ENCODE measurements at regions of chr12 and their contacts with region 1.

Region 1: DNA sequence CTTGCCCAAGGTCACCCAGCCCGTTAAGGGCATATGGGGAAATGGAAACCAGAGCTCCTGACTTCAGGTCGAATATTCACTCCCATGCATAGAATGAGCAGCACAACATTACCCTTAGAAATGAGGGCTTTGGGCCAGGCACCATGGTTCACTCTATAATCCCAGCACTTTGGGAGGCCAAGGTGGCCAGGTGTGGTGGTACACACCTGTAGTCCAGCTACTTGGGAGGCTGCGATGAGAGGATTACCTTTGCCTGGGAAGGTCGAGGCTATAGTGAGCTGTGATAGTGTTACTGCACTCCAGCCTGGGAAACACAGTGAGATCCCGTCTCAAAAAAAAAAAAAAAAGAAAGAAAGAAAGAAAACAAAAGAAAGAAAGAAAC is 341.0 kb upstream of the TMPO start:
- DNase-seq: no peak
- ATAC-seq: no peak
- H3K4me3 ChIP-seq: no peak overlapping the region
- H3K27ac ChIP-seq: no peak overlapping the region
- H3K4me1 ChIP-seq: no peaks in the 10 kb centered on the region
- H3K27me3 ChIP-seq: no peaks in the 10 kb centered on the region; a peak in 1 of 4 replicates
- CTCF ChIP-seq: no peak
- EP300 ChIP-seq: no peak
- POLR2A ChIP-seq: no peak
- RAD21 ChIP-seq: no peak

Region 2: GRCh38 chr12:98154850-98155249 is 19.6 kb before region 1 on chr12:
- CTCF ChIA-PET with region 1: interaction called, 4 read pairs
- POLR2A ChIA-PET with region 1: interaction called, 3 read pairs
- RAD21 ChIA-PET with region 1: interaction called, 3 read pairs
- SMC1A ChIA-PET with region 1: interaction called, 16 read pairs
- in situ Hi-C with region 1: no loop called
- intact Hi-C with region 1: no loop called
- DNase-seq: no peak
- ATAC-seq: peak; percentile 90
- H3K4me3 ChIP-seq: no peak overlapping the region
- H3K27ac ChIP-seq: no peak overlapping the region
- H3K4me1 ChIP-seq: no peaks in the 10 kb centered on the region
- H3K27me3 ChIP-seq: peaks cover 0 to 3% of the 10 kb centered on the region in 2 experiments; a peak in 1 of 4 replicates
- CTCF ChIP-seq: peak in 2 of 3 experiments; percentile 37 to 49; a peak in 2 of 6 replicates
- EP300 ChIP-seq: no peak
- POLR2A ChIP-seq: no peak
- RAD21 ChIP-seq: no peak

Region 3: DNA sequence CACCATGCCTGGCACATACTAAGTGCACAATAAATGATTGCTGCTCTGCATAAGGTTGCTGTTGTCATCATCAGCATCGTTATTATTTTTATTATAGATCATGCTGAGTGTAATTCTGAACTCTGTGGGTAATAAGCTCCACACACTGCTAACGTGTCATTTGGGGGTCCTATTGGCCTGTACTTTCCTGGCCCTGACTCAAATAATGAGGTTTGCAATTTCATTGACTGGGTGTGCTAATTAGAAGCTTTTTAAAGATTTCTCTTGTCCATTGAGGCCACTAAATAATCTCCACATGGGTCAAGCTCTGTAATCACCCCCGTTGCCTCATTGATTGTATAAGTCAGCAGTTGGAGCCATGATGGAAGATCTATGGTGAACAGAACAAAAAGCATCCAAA is 20.2 kb after region 1 on chr12:
- CTCF ChIA-PET with region 1: interaction called, 4 read pairs
- POLR2A ChIA-PET with region 1: interaction called, 3 read pairs
- RAD21 ChIA-PET with region 1: no interaction called
- SMC1A ChIA-PET with region 1: interaction called, 15 read pairs
- in situ Hi-C with region 1: no loop called
- intact Hi-C with region 1: no loop called
- DNase-seq: no peak
- ATAC-seq: no peak
- H3K4me3 ChIP-seq: no peak overlapping the region
- H3K27ac ChIP-seq: no peak overlapping the region
- H3K4me1 ChIP-seq: no peaks in the 10 kb centered on the region
- H3K27me3 ChIP-seq: no peaks in the 10 kb centered on the region
- CTCF ChIP-seq: no peak
- EP300 ChIP-seq: no peak
- POLR2A ChIP-seq: no peak
- RAD21 ChIP-seq: no peak

Measured in GM12878 (cell line).